ENCODE measurements at regions of chr1 and their contacts with region 1.

Region 1: DNA sequence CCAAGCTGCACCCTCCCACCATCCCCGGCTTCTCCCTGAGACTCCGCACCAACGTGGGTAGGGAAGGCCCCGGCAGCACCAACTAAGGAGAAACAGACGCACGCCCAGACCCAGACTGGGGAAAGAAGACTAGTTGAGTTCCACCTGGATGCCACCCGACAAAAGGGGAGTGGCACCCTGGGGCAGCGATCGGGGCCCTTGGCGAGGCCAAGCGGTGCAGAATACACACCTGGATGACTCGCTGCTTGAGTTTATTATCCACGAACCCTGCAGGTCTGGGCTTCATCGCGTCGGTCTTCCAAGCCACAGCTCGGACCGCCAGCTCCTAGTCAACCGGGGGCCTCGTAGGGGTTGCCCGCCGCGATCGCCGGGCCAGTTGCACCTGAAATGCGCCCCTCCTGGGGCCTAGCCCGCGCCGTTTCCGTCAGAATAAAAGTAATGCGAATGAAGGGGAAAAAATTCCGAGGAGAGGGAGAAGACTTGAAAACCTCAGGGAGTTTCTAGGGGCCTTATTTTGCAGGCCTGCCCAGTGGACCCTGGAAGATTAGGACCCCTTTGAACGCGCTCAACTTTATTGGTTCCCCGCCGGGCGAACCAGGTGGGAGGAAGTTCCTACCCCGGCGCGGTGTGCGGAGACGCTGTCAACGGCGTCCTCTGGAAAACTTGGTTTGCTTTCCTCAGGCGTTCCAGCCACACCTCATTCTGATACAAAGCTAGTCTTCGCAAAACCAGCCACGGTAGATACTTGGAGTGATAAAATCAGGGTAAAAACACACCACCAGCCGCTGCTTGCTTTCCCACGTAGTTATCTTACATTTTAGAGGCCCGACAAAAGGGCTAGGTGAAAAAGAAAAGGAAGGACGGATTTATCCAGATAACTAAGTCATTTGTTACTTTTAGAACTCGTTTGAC is at the start of gene NVL:
- DNase-seq: peak; percentile 86
- CTCF ChIP-seq: no peak

Region 2: GRCh38 chr1:223811634-223812415 is 518.3 kb before region 1 on chr1:
- in situ Hi-C with region 1: loop called (anchors 25 kb)
- DNase-seq: peak; percentile 29
- CTCF ChIP-seq: peak; percentile 18

Region 3: GRCh38 chr1:224127925-224128819 is 201.9 kb before region 1 on chr1:
- in situ Hi-C with region 1: loop called (anchors 5 kb)
- DNase-seq: no peak
- CTCF ChIP-seq: no peak

Measured in GM13976 (cell line).